Activated CD4-positive, alpha-beta T cell treated with anti-CD3 and anti-CD28 coated beads, Interleukin-2, amount 10 ng/mL, durations not matched to agents 7 days and 5 days (primary cell): ENCODE measurements at regions of chr15 and their contacts with region 1.

Region 1: GRCh38 chr15:89305395-89305794 is 29.2 kb downstream of the POLG start:
- DNase-seq: no peak
- H3K4me3 Mint-ChIP-seq: no peak overlapping the region
- H3K27ac Mint-ChIP-seq: no peak overlapping the region
- H3K4me1 Mint-ChIP-seq: peaks cover 19% of the 10 kb centered on the region
- H3K27me3 Mint-ChIP-seq: no peaks in the 10 kb centered on the region

Region 2: DNA sequence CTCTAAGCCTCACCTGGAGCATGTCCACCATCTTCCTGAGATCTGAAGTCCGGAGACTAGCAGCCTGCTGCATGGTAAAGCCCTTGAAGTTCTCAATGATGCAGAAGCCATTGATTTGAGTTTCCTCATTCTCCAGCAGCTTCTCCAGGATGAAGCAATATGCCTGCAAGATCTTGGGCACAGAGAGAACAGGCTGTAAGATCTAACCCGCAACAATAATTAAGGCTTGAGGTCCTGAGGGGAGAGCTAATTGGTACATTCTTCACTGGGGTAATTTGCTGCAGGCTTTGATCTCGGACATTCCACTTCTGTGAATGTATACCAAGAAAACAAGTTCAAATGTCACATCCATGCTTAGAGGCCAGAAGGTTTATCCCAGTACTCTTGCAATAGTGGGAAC is 93.7 kb before region 1 on chr15:
- CTCF ChIA-PET with region 1: no interaction called
- POLR2A ChIA-PET with region 1: no interaction called
- DNase-seq: no peak
- H3K4me3 Mint-ChIP-seq: no peak overlapping the region
- H3K27ac Mint-ChIP-seq: no peak overlapping the region
- H3K4me1 Mint-ChIP-seq: peaks cover 5% of the 10 kb centered on the region
- H3K27me3 Mint-ChIP-seq: peaks cover 5% of the 10 kb centered on the region

Region 3: DNA sequence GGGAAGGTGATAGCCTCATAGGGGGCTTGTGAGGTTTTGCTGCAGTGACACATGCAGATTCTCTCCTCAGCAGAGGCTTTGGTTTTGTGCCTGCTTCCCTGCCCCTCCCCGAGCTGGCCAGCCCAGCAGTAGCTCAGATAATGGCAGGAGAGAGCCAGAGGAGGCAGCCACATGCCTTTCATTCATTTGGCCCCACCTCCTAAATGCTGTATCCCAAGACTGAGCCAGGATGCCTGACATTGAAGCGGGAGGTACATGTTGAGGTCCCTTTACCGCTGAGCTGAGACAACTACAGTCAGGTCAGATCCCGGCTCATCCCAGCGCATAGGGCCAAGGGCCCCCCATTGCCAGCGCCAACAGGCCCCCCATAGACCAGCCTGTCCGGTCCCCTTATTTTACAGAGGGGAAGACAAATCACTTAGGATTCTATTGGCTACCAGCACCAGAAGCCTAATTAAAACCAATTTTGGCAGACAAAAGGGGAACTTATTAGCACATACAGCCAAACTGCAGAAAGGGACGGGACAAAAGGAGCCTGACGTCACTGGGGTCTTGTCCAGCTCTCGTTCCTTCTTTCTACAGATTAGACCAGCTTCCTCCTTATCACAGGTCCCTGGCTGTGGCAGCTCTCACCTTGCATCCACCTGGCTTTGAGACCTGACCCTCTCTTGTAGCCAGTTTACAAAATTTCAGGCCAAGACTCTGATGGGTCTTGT is 41.3 kb after region 1 on chr15:
- CTCF ChIA-PET with region 1: no interaction called
- POLR2A ChIA-PET with region 1: interaction called, 11 read pairs
- DNase-seq: no peak
- H3K4me3 Mint-ChIP-seq: no peak overlapping the region
- H3K27ac Mint-ChIP-seq: no peak overlapping the region
- H3K4me1 Mint-ChIP-seq: peaks cover 4% of the 10 kb centered on the region
- H3K27me3 Mint-ChIP-seq: peaks cover 6% of the 10 kb centered on the region

Region 4: GRCh38 chr15:89740137-89740536 is 434.7 kb after region 1 on chr15:
- CTCF ChIA-PET with region 1: no interaction called
- POLR2A ChIA-PET with region 1: no interaction called
- DNase-seq: peak; percentile 74
- H3K4me3 Mint-ChIP-seq: no peak overlapping the region
- H3K27ac Mint-ChIP-seq: no peak overlapping the region
- H3K4me1 Mint-ChIP-seq: peaks cover 1% of the 10 kb centered on the region
- H3K27me3 Mint-ChIP-seq: peaks cover 3% of the 10 kb centered on the region

Region 5: DNA sequence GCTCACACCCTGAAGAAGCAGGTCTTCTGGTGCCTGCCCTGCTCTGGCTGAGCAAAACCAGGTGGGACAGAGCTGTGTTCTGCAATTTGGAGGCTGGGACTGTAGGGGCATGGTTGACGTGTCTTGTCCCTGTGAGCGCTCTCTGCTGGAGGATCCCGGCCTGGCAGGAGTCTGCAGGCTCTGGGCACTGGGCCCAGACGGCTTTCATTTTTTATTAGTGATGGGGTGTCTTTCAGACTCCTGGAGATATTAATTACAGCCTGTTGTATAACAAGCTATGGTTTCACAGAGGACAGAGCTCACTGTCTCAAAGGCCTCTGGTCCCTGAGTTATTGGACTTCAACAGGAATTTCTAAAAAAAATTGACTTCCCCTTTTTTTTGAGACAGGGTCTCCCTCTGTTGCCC is 666.2 kb after region 1 on chr15:
- CTCF ChIA-PET with region 1: no interaction called
- POLR2A ChIA-PET with region 1: no interaction called
- DNase-seq: peak; percentile 61
- H3K4me3 Mint-ChIP-seq: no peak overlapping the region
- H3K27ac Mint-ChIP-seq: no peak overlapping the region
- H3K4me1 Mint-ChIP-seq: peaks cover 7% of the 10 kb centered on the region
- H3K27me3 Mint-ChIP-seq: peaks cover 6% of the 10 kb centered on the region